ENCODE measurements at regions of chr1 and their contacts with region 1.

Region 1: DNA sequence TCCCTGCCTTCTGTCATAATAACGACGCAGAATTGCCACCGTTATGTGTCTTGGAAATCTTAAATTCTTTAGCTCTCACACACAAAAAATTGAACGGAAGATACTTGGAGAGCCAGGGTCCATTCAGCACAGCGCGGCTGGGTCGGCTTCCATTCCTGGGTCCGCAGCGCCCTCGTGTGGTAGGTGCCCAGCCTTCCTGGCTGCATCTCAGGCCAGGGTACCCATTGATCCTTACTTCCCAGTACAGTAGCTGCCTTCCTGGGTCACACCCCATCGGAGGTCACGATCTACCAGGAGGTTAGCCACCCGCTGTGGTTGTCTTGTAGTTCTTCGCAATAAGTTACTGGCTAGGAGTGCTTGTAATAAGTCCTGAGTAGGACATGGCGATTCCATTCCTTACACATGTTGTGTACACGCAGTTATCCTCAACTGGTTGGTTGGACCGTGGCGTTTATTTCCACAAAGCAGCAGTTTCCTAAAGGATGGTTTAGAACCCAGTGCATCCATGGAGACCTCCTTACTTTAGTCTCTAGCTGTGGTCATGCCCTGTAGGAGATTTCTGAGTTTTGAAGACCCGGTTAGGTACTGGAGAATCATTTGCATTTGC is 9.9 kb upstream of the MTARC1 start:
- DNase-seq: peak; percentile 68
- H3K4me3 ChIP-seq: no peak overlapping the region
- H3K27ac ChIP-seq: no peak overlapping the region
- H3K4me1 ChIP-seq: no peaks in the 10 kb centered on the region
- H3K27me3 ChIP-seq: no peaks in the 10 kb centered on the region
- CTCF ChIP-seq: peak; percentile 91 to 94
- POLR2A ChIP-seq: no peak

Region 2: GRCh38 chr1:220189750-220190347 is 587.0 kb before region 1 on chr1:
- CTCF ChIA-PET with region 1: interaction called, 6 read pairs
- POLR2A ChIA-PET with region 1: no interaction called
- dilution Hi-C with region 1: no loop called
- intact Hi-C with region 1: loop called (anchors 2 kb)
- DNase-seq: peak; percentile 25
- H3K4me3 ChIP-seq: no peak overlapping the region
- H3K27ac ChIP-seq: no peak overlapping the region
- H3K4me1 ChIP-seq: no peaks in the 10 kb centered on the region
- H3K27me3 ChIP-seq: no peaks in the 10 kb centered on the region
- CTCF ChIP-seq: peak; percentile 18 to 31
- POLR2A ChIP-seq: no peak

Region 3: DNA sequence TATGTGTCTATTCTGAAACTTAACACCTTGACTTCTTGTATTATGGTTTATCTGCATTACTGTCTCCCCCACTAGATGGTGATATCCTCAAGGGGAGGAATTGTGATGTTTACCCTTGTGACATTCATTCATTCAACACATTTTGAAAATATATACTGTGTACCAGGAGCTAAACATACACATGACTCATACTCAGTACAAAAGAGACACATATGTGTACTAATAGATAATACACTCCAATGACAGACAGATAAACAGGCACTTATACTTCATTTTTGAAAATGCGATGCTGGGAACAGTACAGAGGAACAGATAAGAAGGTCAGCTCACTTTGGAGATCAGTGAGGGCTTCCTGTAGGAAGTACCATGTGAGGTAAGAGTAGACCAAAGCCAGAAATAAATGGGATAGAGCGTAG is 495.7 kb before region 1 on chr1:
- CTCF ChIA-PET with region 1: interaction called, 58 read pairs
- POLR2A ChIA-PET with region 1: no interaction called
- dilution Hi-C with region 1: no loop called
- intact Hi-C with region 1: loop called (anchors 1 kb)
- DNase-seq: peak; percentile 53
- H3K4me3 ChIP-seq: no peak overlapping the region
- H3K27ac ChIP-seq: no peak overlapping the region
- H3K4me1 ChIP-seq: no peaks in the 10 kb centered on the region
- H3K27me3 ChIP-seq: peaks cover 20 to 24% of the 10 kb centered on the region in 2 experiments
- CTCF ChIP-seq: peak; percentile 17 to 18
- POLR2A ChIP-seq: no peak

Region 4: GRCh38 chr1:220527908-220528678 is 248.7 kb before region 1 on chr1 and contains the start of gene MARK1:
- CTCF ChIA-PET with region 1: interaction called, 6 read pairs
- POLR2A ChIA-PET with region 1: no interaction called
- dilution Hi-C with region 1: no loop called
- intact Hi-C with region 1: loop called (anchors 2 kb)
- DNase-seq: peak; percentile 37
- H3K4me3 ChIP-seq: peak within 1 kb of the TSS; percentile 64 to 94 (median 78)
- H3K27ac ChIP-seq: peak within 1 kb of the TSS; percentile 2
- H3K4me1 ChIP-seq: peaks cover 7% of the 10 kb centered on the region
- H3K27me3 ChIP-seq: peaks cover 10 to 23% of the 10 kb centered on the region in 2 experiments
- CTCF ChIP-seq: no peak
- POLR2A ChIP-seq: peak; percentile 28
- total RNA-seq, gene MARK1: 5.5 and 6.0 TPM in 2 replicates

Region 5: GRCh38 chr1:220690140-220691025 is 86.4 kb before region 1 on chr1 and contains the start of gene C1orf115:
- CTCF ChIA-PET with region 1: interaction called, 40 read pairs
- POLR2A ChIA-PET with region 1: no interaction called
- dilution Hi-C with region 1: no loop called
- intact Hi-C with region 1: loop called (anchors 1 kb)
- DNase-seq: peak; percentile 81
- H3K4me3 ChIP-seq: peak within 1 kb of the TSS; percentile 61 to 78 (median 78)
- H3K27ac ChIP-seq: no peak within 1 kb of the TSS
- H3K4me1 ChIP-seq: peaks cover 17% of the 10 kb centered on the region
- H3K27me3 ChIP-seq: no peaks in the 10 kb centered on the region
- CTCF ChIP-seq: peak; percentile 99
- POLR2A ChIP-seq: peak; percentile 54
- total RNA-seq, gene C1orf115: 15.8 and 16.4 TPM in 2 replicates

Region 6: GRCh38 chr1:220748089-220748934 is 28.5 kb before region 1 on chr1 and contains the start of gene MTARC2:
- CTCF ChIA-PET with region 1: interaction called, 33 read pairs
- POLR2A ChIA-PET with region 1: no interaction called
- dilution Hi-C with region 1: no loop called
- intact Hi-C with region 1: loop called (anchors 2 kb)
- DNase-seq: peak; percentile 85
- H3K4me3 ChIP-seq: peak within 1 kb of the TSS; percentile 60 to 78 (median 74)
- H3K27ac ChIP-seq: peak within 1 kb of the TSS; percentile 42
- H3K4me1 ChIP-seq: peaks cover 14% of the 10 kb centered on the region
- H3K27me3 ChIP-seq: no peaks in the 10 kb centered on the region
- CTCF ChIP-seq: no peak
- POLR2A ChIP-seq: peak; percentile 88
- total RNA-seq, gene MTARC2: 12.0 and 14.1 TPM in 2 replicates

Measured in endothelial cell of umbilical vein (primary cell).